ENCODE measurements at regions of chr6 and their contacts with region 1.

Region 1: GRCh38 chr6:53651764-53652401 is 13.7 kb downstream of the KLHL31 start:
- DNase-seq: peak; percentile 84
- ATAC-seq: peak; percentile 92
- H3K4me3 Mint-ChIP-seq: peak overlapping the region; percentile 83
- H3K27ac Mint-ChIP-seq: peak overlapping the region; percentile 88
- H3K4me1 Mint-ChIP-seq: peaks cover 31% of the 10 kb centered on the region
- H3K27me3 Mint-ChIP-seq: no peaks in the 10 kb centered on the region
- CTCF ChIP-seq: no peak

Region 2: GRCh38 chr6:53492860-53493634 is 158.8 kb before region 1 on chr6:
- CTCF ChIA-PET with region 1: interaction called, 56 read pairs
- POLR2A ChIA-PET with region 1: interaction called, 5 read pairs
- intact Hi-C with region 1: loop called (anchors 1 kb)
- DNase-seq: peak; percentile 44
- ATAC-seq: peak; percentile 89
- H3K4me3 Mint-ChIP-seq: no peak overlapping the region
- H3K27ac Mint-ChIP-seq: peak overlapping the region; percentile 32
- H3K4me1 Mint-ChIP-seq: peaks cover 6% of the 10 kb centered on the region
- H3K27me3 Mint-ChIP-seq: peaks cover 13% of the 10 kb centered on the region
- CTCF ChIP-seq: peak; percentile 77

Region 3: GRCh38 chr6:53544470-53545308 is 107.2 kb before region 1 on chr6 and contains the start of gene GCLC:
- CTCF ChIA-PET with region 1: interaction called, 20 read pairs
- POLR2A ChIA-PET with region 1: interaction called, 12 read pairs
- intact Hi-C with region 1: loop called (anchors 2 kb)
- DNase-seq: peak; percentile 95
- ATAC-seq: peak; percentile 78
- H3K4me3 Mint-ChIP-seq: peak within 1 kb of the TSS; percentile 94
- H3K27ac Mint-ChIP-seq: peak within 1 kb of the TSS; percentile 92
- H3K4me1 Mint-ChIP-seq: peaks cover 52% of the 10 kb centered on the region
- H3K27me3 Mint-ChIP-seq: peaks cover 1% of the 10 kb centered on the region
- CTCF ChIP-seq: peak; percentile 84
- total RNA-seq, gene GCLC: 17.0 to 18.6 TPM

Region 4: DNA sequence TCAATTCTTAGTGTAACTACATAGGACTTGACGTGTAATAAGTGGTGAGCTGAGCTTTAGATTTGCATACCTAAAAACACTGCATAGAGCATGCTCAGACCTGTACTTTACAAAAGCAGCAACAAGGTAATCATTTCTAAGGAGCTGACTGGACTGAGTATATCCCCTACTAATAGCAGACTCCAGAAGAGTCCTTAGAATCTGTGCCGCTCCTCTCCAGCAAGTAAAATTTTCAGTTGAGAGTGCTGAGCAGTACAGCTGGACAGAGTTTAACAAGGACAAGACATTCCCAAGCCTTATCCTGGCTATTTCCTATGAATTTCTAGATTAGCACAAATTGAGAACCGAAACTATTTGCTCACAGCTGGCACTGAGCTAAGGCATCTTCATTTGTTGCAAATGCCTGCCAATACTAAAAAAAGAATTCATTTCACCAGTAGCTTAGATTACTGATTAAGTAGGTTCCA is 39.8 kb after region 1 on chr6:
- CTCF ChIA-PET with region 1: no interaction called
- POLR2A ChIA-PET with region 1: no interaction called
- intact Hi-C with region 1: no loop called
- DNase-seq: no peak
- ATAC-seq: no peak
- H3K4me3 Mint-ChIP-seq: no peak overlapping the region
- H3K27ac Mint-ChIP-seq: no peak overlapping the region
- H3K4me1 Mint-ChIP-seq: no peaks in the 10 kb centered on the region
- H3K27me3 Mint-ChIP-seq: no peaks in the 10 kb centered on the region
- CTCF ChIP-seq: no peak